B cell (primary cell): ENCODE measurements at regions of chr6 and their contacts with region 1.

Region 1: GRCh38 chr6:29752451-29753308 is 29.4 kb downstream of the HLA-F start:
- DNase-seq: peak; percentile 91
- ATAC-seq: peak; percentile 63
- H3K4me3 ChIP-seq: peak overlapping the region; percentile 57 to 94 (median 84)
- H3K4me3 Mint-ChIP-seq: peak overlapping the region; percentile 97
- H3K27ac ChIP-seq: peak overlapping the region; percentile 76 to 83
- H3K27ac Mint-ChIP-seq: peak overlapping the region; percentile 97
- H3K4me1 ChIP-seq: peaks cover 22 to 29% of the 10 kb centered on the region in 2 donors
- H3K4me1 Mint-ChIP-seq: peaks cover 47% of the 10 kb centered on the region
- H3K27me3 ChIP-seq: no peaks in the 10 kb centered on the region
- H3K27me3 Mint-ChIP-seq: no peaks in the 10 kb centered on the region
- CTCF ChIP-seq: peak; percentile 97

Region 2: GRCh38 chr6:29395331-29395730 is 357.3 kb before region 1 on chr6 and contains the start of gene OR12D2:
- CTCF ChIA-PET with region 1: no interaction called
- POLR2A ChIA-PET with region 1: no interaction called
- intact Hi-C with region 1: no loop called
- DNase-seq: no peak
- ATAC-seq: no peak
- H3K4me3 ChIP-seq: no peak within 1 kb of the TSS
- H3K4me3 Mint-ChIP-seq: no peak within 1 kb of the TSS
- H3K27ac ChIP-seq: no peak within 1 kb of the TSS
- H3K27ac Mint-ChIP-seq: no peak within 1 kb of the TSS
- H3K4me1 ChIP-seq: no peaks in the 10 kb centered on the region
- H3K4me1 Mint-ChIP-seq: no peaks in the 10 kb centered on the region
- H3K27me3 ChIP-seq: peaks cover 0 to 11% (median 1%) of the 10 kb centered on the region in 4 experiments
- H3K27me3 Mint-ChIP-seq: peaks cover 22% of the 10 kb centered on the region
- CTCF ChIP-seq: no peak
- total RNA-seq, gene OR12D2: not detected in 2 replicates

Region 3: GRCh38 chr6:29705389-29706231 is 47.1 kb before region 1 on chr6:
- CTCF ChIA-PET with region 1: interaction called, 21 read pairs
- POLR2A ChIA-PET with region 1: no interaction called
- intact Hi-C with region 1: loop called (anchors 1 kb)
- DNase-seq: peak; percentile 64
- ATAC-seq: no peak
- H3K4me3 ChIP-seq: no peak overlapping the region
- H3K4me3 Mint-ChIP-seq: no peak overlapping the region
- H3K27ac ChIP-seq: no peak overlapping the region
- H3K27ac Mint-ChIP-seq: no peak overlapping the region
- H3K4me1 ChIP-seq: peaks cover 18 to 39% of the 10 kb centered on the region in 2 donors
- H3K4me1 Mint-ChIP-seq: peaks cover 21% of the 10 kb centered on the region
- H3K27me3 ChIP-seq: peaks cover 0 to 17% (median 7%) of the 10 kb centered on the region in 4 experiments
- H3K27me3 Mint-ChIP-seq: peaks cover 35% of the 10 kb centered on the region
- CTCF ChIP-seq: peak; percentile 72

Region 4: GRCh38 chr6:29737707-29738630 is 14.7 kb before region 1 on chr6:
- CTCF ChIA-PET with region 1: interaction called, 179 read pairs
- POLR2A ChIA-PET with region 1: interaction called, 3 read pairs
- intact Hi-C with region 1: loop called (anchors 1 kb)
- DNase-seq: peak; percentile 82
- ATAC-seq: peak; percentile 85
- H3K4me3 ChIP-seq: no peak overlapping the region
- H3K4me3 Mint-ChIP-seq: no peak overlapping the region
- H3K27ac ChIP-seq: no peak overlapping the region
- H3K27ac Mint-ChIP-seq: no peak overlapping the region
- H3K4me1 ChIP-seq: peaks cover 0 to 5% of the 10 kb centered on the region in 2 donors
- H3K4me1 Mint-ChIP-seq: peaks cover 12% of the 10 kb centered on the region
- H3K27me3 ChIP-seq: no peaks in the 10 kb centered on the region
- H3K27me3 Mint-ChIP-seq: no peaks in the 10 kb centered on the region
- CTCF ChIP-seq: peak; percentile 82

Region 5: GRCh38 chr6:29797966-29798365 is 45.3 kb after region 1 on chr6:
- CTCF ChIA-PET with region 1: no interaction called
- POLR2A ChIA-PET with region 1: no interaction called
- intact Hi-C with region 1: no loop called
- DNase-seq: no peak
- ATAC-seq: no peak
- H3K4me3 ChIP-seq: no peak overlapping the region
- H3K4me3 Mint-ChIP-seq: no peak overlapping the region
- H3K27ac ChIP-seq: no peak overlapping the region
- H3K27ac Mint-ChIP-seq: no peak overlapping the region
- H3K4me1 ChIP-seq: peaks cover 4% of the 10 kb centered on the region in 2 donors
- H3K4me1 Mint-ChIP-seq: peaks cover 6% of the 10 kb centered on the region
- H3K27me3 ChIP-seq: peaks cover 0 to 22% (median 17%) of the 10 kb centered on the region in 4 experiments
- H3K27me3 Mint-ChIP-seq: peaks cover 35% of the 10 kb centered on the region
- CTCF ChIP-seq: no peak

Region 6: DNA sequence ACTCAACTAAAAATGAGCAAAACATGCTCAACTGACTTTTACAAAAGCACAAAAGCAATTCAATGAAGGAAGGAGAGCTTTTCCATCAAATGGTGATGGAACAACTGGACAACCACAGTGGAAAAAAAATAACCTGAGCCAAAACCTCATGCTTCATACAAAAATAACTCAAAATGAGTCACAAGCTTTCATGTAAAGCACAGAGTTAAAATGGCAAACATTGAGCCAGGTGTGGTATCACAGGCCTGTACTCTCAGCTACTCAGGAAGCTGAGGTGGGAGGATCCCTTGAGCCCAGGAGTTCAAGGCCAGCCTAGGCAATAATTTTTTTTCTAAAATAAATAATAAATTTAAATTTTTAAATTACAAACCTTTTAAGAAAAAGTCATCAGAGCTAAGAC is 56.6 kb after region 1 on chr6:
- CTCF ChIA-PET with region 1: no interaction called
- POLR2A ChIA-PET with region 1: no interaction called
- intact Hi-C with region 1: no loop called
- DNase-seq: no peak
- ATAC-seq: no peak
- H3K4me3 ChIP-seq: no peak overlapping the region
- H3K4me3 Mint-ChIP-seq: no peak overlapping the region
- H3K27ac ChIP-seq: no peak overlapping the region
- H3K27ac Mint-ChIP-seq: no peak overlapping the region
- H3K4me1 ChIP-seq: no peaks in the 10 kb centered on the region
- H3K4me1 Mint-ChIP-seq: no peaks in the 10 kb centered on the region
- H3K27me3 ChIP-seq: peaks cover 0 to 20% (median 7%) of the 10 kb centered on the region in 4 experiments
- H3K27me3 Mint-ChIP-seq: peaks cover 29% of the 10 kb centered on the region
- CTCF ChIP-seq: no peak

Region 7: DNA sequence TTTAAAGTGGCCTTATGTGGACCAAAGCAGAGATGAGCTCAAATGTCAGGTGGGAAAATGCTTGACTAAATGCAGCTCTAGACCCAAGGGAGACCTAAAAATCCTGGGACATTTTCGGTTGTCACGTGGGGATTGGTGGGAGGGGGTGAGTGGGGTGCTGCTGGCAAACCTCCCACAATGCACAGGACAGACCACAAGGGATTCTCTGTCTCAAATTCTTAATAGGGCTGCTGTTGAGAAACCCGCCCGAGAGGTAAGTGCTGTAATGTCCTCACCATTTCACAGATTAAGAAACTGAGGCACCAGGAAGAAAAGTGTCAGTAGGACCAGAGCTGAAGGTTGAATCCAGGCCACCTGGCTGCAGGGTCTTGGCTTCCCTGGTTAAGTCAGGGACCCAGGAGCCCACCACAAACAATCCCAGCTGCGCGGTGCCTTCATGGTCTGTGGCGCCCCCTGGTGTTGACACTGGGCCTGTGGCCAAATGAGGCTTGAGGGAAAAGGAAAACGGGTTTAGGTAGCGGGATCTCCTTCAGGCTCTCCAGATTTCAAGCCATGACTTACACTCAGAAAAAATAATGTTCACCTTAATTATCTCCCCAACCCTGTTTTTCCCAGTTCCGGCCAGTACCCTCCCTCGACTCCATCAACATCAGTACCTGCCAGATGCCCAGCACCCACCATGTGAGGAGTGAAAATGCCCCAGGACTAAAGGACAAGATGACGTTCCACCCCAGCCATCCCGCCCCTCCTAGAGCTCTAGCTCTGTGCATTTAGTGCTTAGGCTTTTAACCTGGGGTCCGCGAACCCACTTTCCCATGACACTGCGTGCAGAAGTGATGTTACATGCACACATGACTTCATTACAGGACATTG is 82.1 kb after region 1 on chr6:
- CTCF ChIA-PET with region 1: interaction called, 14 read pairs
- POLR2A ChIA-PET with region 1: no interaction called
- intact Hi-C with region 1: no loop called
- DNase-seq: peak; percentile 69
- ATAC-seq: no peak
- H3K4me3 ChIP-seq: no peak overlapping the region
- H3K4me3 Mint-ChIP-seq: no peak overlapping the region
- H3K27ac ChIP-seq: no peak overlapping the region
- H3K27ac Mint-ChIP-seq: no peak overlapping the region
- H3K4me1 ChIP-seq: no peaks in the 10 kb centered on the region
- H3K4me1 Mint-ChIP-seq: no peaks in the 10 kb centered on the region
- H3K27me3 ChIP-seq: peaks cover 0 to 43% (median 19%) of the 10 kb centered on the region in 4 experiments
- H3K27me3 Mint-ChIP-seq: peaks cover 74% of the 10 kb centered on the region
- CTCF ChIP-seq: peak; percentile 89

Region 8: DNA sequence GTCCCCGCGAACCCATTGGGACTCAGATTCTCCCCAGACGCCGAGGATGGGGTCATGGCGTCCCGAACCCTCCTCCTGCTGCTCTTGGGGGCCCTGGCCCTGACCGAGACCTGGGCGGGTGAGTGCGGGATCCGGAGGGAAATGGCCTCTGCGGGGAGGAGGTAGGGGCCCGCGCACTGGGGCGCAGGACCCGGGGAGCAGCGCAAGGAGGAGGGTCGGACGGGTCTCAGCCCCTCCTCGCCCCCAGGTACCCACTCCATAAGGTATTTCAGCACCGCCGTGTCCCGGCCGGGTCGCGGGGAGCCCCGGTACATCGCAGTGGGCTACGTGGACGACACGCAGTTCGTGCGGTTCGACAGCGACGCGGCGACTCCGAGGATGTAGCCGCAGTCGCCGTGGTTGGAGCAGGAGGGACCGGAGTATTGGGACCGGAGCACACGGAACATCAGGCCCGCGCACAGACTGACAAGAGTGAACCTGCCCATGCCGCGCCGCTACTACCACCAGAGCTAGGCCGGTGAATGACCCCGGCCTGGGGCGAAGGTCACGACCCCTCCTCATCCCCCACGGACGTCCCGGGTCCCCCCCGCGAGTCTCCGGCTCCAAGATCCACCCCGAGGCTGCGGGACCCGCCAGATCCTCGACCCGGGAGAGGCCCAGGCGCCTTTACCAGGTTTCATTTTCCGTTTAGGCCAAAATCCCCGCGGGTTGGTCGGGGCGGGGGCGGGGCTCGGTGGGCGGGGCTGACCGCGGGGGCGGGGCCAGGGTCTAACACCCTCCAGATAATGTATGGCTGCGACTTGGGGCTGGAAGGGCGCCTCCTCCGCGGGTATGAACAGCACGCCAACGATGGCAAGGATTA is 174.0 kb after region 1 on chr6:
- CTCF ChIA-PET with region 1: no interaction called
- POLR2A ChIA-PET with region 1: no interaction called
- intact Hi-C with region 1: no loop called
- DNase-seq: peak; percentile 89
- ATAC-seq: peak; percentile 84
- H3K4me3 ChIP-seq: peak overlapping the region; percentile 59 to 88 (median 74)
- H3K4me3 Mint-ChIP-seq: peak overlapping the region; percentile 93
- H3K27ac ChIP-seq: peak overlapping the region; percentile 91 to 93
- H3K27ac Mint-ChIP-seq: peak overlapping the region; percentile 95
- H3K4me1 ChIP-seq: peaks cover 4 to 17% of the 10 kb centered on the region in 2 donors
- H3K4me1 Mint-ChIP-seq: peaks cover 14% of the 10 kb centered on the region
- H3K27me3 ChIP-seq: no peaks in the 10 kb centered on the region
- H3K27me3 Mint-ChIP-seq: no peaks in the 10 kb centered on the region
- CTCF ChIP-seq: no peak